ENCODE measurements at regions of chr9 and their contacts with region 1.

Region 1: GRCh38 chr9:136488247-136489214 is 5.7 kb upstream of the SEC16A start:
- DNase-seq: peak; percentile 79 to 85
- H3K4me3 ChIP-seq: no peak overlapping the region
- H3K27ac ChIP-seq: no peak overlapping the region
- H3K4me1 ChIP-seq: peaks cover 10 to 16% of the 10 kb centered on the region in 2 donors
- H3K27me3 ChIP-seq: no peaks in the 10 kb centered on the region
- CTCF ChIP-seq: peak; percentile 93 to 99 (median 96)
- POLR2A ChIP-seq: no peak

Region 2: DNA sequence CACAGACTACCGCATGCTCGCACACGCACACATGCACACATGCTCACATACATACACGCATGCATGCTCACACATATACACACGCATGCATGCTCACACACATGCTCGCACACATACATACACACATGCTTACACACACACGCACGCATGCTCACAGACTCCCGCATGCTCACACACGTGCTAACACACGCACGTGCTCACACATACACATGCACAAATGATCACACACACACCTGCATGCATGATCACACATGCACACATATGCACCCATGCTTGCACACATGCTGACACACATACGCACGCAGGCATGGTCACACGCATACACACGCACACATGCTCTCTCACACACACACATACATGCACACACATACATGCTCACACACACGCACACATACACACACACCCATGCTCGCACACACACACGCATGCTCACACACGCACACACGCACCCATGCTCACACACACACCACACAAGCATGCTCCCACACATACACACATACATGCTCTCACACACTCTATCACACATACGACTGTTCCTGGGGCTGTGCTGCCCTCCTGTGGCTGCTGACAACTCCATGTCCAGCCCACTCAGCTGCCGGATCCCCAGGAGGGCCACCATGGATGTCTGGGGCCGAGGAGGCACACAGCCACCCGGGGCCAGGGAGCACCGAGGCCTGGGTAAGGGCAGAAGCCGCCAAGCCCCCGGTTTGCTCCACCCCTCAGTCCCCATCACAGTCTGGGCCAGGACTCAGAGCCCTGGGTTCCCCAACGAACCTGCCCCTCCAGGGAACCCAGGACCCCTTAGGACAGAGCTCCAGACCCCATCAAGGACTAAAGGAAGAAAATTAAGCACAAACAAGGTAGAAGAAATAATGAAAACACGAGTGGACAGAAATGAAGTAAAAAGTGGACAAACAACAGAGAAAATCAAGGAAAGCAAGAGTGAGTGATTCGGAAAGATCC is 142.8 kb after region 1 on chr9:
- intact Hi-C with region 1: loop called (anchors 2 kb)
- DNase-seq: peak; percentile 75 to 77
- H3K4me3 ChIP-seq: no peak overlapping the region
- H3K27ac ChIP-seq: no peak overlapping the region
- H3K4me1 ChIP-seq: peaks cover 6 to 10% of the 10 kb centered on the region in 2 donors
- H3K27me3 ChIP-seq: no peaks in the 10 kb centered on the region
- CTCF ChIP-seq: peak; percentile 47 to 97 (median 80)
- POLR2A ChIP-seq: no peak